Vagina (tissue), 2 donors: ENCODE measurements at regions of chr1 and their contacts with region 1.

Region 1: DNA sequence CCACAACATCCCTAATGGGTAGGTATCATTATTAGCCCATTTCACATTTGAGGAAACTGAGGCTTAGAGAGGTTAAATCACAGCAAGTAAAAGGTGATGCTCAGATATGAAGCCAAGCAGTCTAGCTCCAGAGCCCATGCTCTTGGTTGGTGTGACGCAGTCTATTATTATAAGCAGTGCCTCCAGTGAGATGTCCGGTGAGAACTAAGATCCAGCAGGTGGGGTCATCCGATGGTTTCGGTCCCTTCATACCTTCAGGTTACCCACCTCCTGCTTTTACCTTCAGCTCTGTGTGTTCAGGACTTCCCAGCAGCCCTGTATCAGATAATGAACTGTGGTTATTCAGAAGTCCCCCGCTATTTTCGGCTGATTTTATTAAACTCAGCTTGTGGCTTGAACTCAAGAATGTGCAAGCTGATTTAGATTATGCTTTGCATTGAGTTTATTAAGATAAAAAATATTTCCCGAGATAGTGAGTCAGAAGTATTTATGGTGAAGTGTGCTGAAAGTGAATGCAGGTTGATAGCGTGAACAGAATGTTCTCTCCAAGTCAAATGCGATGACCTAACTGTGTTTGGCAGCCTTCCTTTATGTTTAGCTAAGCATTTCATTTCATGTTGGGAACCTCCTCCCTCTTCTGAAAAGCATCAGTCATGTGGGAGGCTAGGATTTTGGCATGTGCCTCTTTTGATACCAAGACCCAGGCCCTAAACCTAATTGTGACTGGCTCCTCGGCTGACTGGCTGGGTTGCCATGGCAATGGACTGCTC is 160.9 kb upstream of the UBE2U start:
- DNase-seq: no peak
- H3K4me3 ChIP-seq: no peak overlapping the region
- H3K27ac ChIP-seq: peak overlapping the region; percentile 68
- H3K4me1 ChIP-seq: peaks cover 50% of the 10 kb centered on the region
- H3K27me3 ChIP-seq: no peaks in the 10 kb centered on the region
- CTCF ChIP-seq: no peak
- POLR2A ChIP-seq: no peak

Region 2: DNA sequence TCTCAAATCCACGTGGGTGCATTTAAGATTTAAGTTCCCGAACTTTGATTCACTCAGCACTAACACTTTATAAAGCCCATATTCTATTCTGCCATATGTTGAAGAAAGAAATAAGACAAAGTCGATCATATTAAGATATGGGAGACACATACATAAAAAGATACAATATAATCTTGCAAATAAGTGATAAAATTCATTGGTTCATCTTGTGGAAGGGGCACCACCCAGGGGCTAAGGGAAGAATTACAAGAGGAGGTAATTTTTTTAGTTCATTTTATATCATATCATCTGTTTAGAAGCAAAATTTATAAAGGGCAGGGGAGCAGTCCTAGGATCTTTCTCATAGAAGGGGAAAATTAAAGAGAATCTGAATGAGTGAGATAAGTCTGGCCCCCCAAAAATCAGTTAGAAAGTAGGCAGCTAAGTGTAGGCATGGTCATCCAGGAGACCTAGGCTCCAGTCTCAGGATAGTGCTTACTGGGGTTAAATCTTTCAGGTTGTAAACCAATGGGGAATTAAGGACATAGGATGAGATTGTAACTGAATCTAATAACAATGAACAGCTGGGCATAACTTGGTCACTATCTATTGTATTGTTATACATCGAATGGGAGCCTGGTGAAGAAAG is 1972.0 kb before region 1 on chr1:
- intact Hi-C with region 1: no loop called
- DNase-seq: no peak
- H3K4me3 ChIP-seq: no peak overlapping the region
- H3K27ac ChIP-seq: no peak overlapping the region
- H3K4me1 ChIP-seq: peaks cover 9% of the 10 kb centered on the region
- H3K27me3 ChIP-seq: no peaks in the 10 kb centered on the region
- CTCF ChIP-seq: no peak
- POLR2A ChIP-seq: no peak

Region 3: DNA sequence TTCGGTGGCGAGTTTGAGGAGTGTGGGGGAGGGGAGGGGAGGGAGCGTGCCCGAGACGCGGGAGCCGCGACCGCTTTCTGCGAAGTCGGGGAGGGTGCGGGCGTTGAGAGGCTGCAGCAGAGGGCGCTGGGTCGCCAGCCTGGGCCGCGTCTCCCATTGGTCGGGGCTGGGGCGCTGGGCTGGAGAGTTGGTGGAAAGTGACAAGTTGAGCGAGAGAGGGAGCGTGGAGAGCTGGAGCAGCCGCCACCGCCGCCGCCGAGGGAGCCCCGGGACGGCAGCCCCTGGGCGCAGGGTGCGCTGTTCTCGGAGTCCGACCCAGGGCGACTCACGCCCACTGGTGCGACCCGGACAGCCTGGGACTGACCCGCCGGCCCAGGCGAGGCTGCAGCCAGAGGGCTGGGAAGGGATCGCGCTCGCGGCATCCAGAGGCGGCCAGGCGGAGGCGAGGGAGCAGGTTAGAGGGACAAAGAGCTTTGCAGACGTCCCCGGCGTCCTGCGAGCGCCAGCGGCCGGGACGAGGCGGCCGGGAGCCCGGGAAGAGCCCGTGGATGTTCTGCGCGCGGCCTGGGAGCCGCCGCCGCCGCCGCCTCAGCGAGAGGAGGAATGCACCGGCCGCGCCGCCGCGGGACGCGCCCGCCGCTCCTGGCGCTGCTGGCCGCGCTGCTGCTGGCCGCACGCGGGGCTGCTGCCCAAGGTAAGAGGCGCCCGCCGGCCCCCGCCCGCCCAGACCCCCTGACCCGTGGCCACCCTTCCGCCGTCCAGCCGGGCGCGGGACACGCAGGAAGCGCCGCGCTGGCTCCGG is 268.5 kb before region 1 on chr1 and contains the start of gene ROR1:
- intact Hi-C with region 1: loop called (anchors 10 kb)
- DNase-seq: peak in 1 of 2 donors; percentile 94
- H3K4me3 ChIP-seq: peak within 1 kb of the TSS; percentile 63 to 78
- H3K27ac ChIP-seq: peak within 1 kb of the TSS; percentile 93
- H3K4me1 ChIP-seq: peaks cover 23% of the 10 kb centered on the region
- H3K27me3 ChIP-seq: no peaks in the 10 kb centered on the region
- CTCF ChIP-seq: peak in 2 of 3 experiments; percentile 45 to 72
- POLR2A ChIP-seq: peak in 1 of 2 donors; percentile 49
- total RNA-seq, gene ROR1: 11.0 TPM

Region 4: GRCh38 chr1:64163970-64164369 is 121.5 kb after region 1 on chr1:
- intact Hi-C with region 1: no loop called
- DNase-seq: no peak
- H3K4me3 ChIP-seq: no peak overlapping the region
- H3K27ac ChIP-seq: no peak overlapping the region
- H3K4me1 ChIP-seq: no peaks in the 10 kb centered on the region
- H3K27me3 ChIP-seq: no peaks in the 10 kb centered on the region
- CTCF ChIP-seq: no peak
- POLR2A ChIP-seq: no peak